Activated naive CD4-positive, alpha-beta T cell treated with anti-CD3 and anti-CD28 coated beads for 36 hours (primary cell): ENCODE measurements at regions of chr2 and their contacts with region 1.

Region 1: DNA sequence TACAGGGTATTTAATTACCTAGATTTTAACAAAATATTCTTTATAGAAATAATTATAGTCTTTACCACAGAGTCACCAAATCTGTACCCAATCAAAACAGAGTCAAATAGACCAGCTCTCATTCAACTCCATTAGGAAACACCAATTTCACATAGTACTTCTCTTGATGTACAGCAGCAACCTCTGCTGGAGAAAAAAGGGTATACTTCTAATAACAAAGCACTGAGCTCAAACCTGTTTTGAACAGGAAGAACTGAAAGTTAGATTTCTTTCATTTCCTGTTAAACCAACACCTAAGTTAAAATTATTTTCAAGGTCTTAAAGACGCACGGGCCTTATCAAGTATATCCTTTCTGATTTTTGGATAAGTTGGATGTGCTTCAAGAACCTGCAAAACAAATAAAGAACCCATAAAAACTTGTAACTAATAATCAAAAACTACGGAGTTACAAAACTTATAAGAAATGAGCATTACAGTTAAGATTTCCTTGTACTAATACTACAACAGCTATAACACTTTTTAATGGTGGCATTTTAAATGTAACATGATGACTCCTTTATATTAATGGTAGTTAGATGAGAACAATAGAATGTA is 79.0 kb downstream of the TTC21B start:
- DNase-seq: peak; percentile 13
- H3K4me3 Mint-ChIP-seq: no peak overlapping the region
- H3K27ac Mint-ChIP-seq: no peak overlapping the region
- H3K4me1 Mint-ChIP-seq: peaks cover 26% of the 10 kb centered on the region
- H3K27me3 Mint-ChIP-seq: no peaks in the 10 kb centered on the region

Region 2: GRCh38 chr2:165015052-165015642 is 859.4 kb before region 1 on chr2:
- CTCF ChIA-PET with region 1: no interaction called
- intact Hi-C with region 1: loop called (anchors 1 kb)
- DNase-seq: peak; percentile 74
- H3K4me3 Mint-ChIP-seq: no peak overlapping the region
- H3K27ac Mint-ChIP-seq: no peak overlapping the region
- H3K4me1 Mint-ChIP-seq: no peaks in the 10 kb centered on the region
- H3K27me3 Mint-ChIP-seq: peaks cover 9% of the 10 kb centered on the region

Region 3: DNA sequence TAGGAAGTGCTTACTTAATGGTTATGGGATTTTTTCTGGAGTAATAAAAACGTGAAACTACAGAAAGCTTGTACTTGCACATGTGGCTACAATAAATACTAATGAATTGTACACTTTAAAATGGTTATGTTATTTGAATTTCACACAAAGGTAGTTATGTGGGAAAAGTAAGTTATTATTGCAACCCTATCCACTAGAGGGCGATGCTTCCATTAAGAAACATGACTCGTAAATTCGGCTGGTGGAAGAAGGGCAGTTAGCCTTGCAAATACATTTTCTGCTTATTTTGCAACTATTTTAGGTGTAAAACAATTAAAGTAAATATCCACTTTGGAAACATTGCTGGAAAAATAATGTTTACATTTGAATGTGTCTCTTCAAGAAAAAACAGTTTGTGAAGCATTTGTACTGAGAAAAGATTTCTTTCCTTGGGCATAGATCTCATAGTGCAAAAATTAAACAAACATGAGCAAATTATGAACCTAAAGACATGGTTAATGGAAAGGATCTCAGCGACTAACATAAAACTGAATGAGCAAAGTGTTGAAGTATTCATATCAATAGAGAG is 473.2 kb before region 1 on chr2:
- CTCF ChIA-PET with region 1: interaction called, 25 read pairs
- intact Hi-C with region 1: loop called (anchors 1 kb)
- DNase-seq: peak; percentile 23
- H3K4me3 Mint-ChIP-seq: no peak overlapping the region
- H3K27ac Mint-ChIP-seq: no peak overlapping the region
- H3K4me1 Mint-ChIP-seq: peaks cover 6% of the 10 kb centered on the region
- H3K27me3 Mint-ChIP-seq: peaks cover 16% of the 10 kb centered on the region

Region 4: DNA sequence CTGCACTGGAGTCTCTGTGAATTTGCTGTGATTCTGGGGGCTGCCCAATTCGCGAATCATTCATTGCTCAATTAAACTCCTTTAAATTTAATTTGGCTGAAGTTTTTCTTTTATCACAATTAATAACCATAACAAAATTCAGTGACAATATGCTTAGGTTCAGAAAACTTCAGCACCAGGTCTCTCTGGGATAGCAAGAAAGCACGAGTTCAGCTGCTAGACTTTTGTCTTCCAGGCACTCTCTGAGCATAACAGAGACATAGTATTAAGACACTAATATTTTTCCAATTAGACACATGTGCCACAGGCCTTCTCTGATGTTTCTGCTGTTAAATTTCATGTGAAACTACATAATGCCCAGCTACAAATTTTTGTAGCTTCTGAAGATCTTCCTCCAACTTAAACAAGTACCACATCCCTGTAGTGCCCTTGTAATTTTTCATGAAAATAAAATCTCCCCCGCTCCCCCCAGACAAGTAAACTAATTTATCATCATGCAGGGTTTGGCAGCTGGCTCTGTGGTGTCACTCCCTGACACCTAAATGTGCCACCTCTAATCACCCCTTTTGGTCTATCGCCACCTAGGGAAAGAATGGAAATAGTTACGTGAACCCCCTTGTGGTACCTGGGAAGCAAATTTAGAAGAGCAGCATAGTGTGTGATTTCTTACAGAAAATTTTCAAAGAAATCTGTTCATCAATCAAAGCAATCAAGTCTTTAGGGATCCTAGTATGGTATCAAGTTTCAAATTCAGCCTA is 310.9 kb before region 1 on chr2:
- CTCF ChIA-PET with region 1: interaction called, 3 read pairs
- intact Hi-C with region 1: loop called (anchors 1 kb)
- DNase-seq: no peak
- H3K4me3 Mint-ChIP-seq: no peak overlapping the region
- H3K27ac Mint-ChIP-seq: no peak overlapping the region
- H3K4me1 Mint-ChIP-seq: no peaks in the 10 kb centered on the region
- H3K27me3 Mint-ChIP-seq: peaks cover 8% of the 10 kb centered on the region

Region 5: DNA sequence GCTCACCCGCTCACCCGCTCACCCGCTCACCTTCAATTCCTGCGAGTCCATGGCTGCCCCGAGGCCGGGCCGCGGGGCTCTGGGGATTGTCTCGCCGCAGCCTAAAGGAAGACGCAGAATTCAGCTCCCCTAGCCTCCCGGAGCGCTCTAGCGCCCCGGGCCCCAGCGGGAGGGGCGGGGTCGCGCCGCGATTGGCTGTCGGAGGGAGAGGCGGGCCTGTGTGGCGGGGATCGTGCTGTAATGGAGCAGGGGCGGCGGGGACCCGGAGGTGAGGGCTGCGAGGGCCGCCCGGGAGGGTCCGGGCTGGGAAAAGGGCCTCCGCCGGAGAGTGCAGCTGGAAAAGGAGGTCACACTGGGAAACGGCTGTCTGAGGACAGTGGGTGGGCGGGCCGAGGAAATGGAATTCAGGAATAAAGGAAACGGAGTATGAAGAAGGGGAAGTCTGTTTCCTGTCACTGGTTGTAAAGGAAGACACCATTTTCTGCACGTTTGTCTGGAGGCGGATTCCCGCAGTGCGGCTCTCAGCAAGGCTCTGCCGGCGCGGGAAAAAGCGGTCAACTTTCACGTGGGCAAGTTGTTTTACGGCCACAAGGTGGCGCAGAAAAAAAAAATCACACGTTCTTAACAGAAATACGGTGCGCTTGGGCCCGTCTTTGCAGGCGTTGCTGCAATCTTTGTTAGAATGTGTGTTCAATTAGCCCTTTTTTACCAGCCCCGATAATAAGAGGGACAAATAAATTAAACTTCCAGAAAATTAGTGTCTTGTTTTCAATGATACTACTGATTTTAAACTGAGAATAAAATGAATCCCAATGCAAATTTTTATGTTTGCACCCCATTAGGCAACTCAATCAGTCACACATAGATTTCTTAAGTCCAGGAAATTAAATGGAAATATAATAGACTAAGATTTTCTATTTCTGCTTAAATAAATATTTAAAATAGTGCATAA is 79.4 kb after region 1 on chr2 and contains the start of gene TTC21B:
- CTCF ChIA-PET with region 1: interaction called, 3 read pairs
- intact Hi-C with region 1: loop called (anchors 1 kb)
- DNase-seq: peak; percentile 93
- H3K4me3 Mint-ChIP-seq: peak within 1 kb of the TSS; percentile 53
- H3K27ac Mint-ChIP-seq: no peak within 1 kb of the TSS
- H3K4me1 Mint-ChIP-seq: peaks cover 13% of the 10 kb centered on the region
- H3K27me3 Mint-ChIP-seq: no peaks in the 10 kb centered on the region
- total RNA-seq, gene TTC21B: 22.6 TPM